Naive thymus-derived CD4-positive, alpha-beta T cell (primary cell): ENCODE measurements at regions of chr3 and their contacts with region 1.

Region 1: GRCh38 chr3:120348981-120349818 is at the start of gene LRRC58:
- DNase-seq: peak; percentile 85 to 95 (median 94)
- ATAC-seq: peak; percentile 95
- H3K4me3 ChIP-seq: peak within 1 kb of the TSS; percentile 91
- H3K4me3 Mint-ChIP-seq: peak within 1 kb of the TSS; percentile 85 to 96 (median 94)
- H3K27ac ChIP-seq: peak within 1 kb of the TSS; percentile 76
- H3K27ac Mint-ChIP-seq: peak within 1 kb of the TSS; percentile 87 to 97 (median 93)
- H3K4me1 ChIP-seq: peaks cover 20 to 26% of the 10 kb centered on the region in 2 donors
- H3K4me1 Mint-ChIP-seq: peaks cover 39 to 54% (median 48%) of the 10 kb centered on the region in 7 donors
- H3K27me3 ChIP-seq: no peaks in the 10 kb centered on the region
- H3K27me3 Mint-ChIP-seq: peaks cover 0 to 29% (median 0%) of the 10 kb centered on the region in 5 donors
- total RNA-seq, gene LRRC58: 12.3 to 24.1 (median 20.8) TPM

Region 2: GRCh38 chr3:119463171-119464169 is 885.7 kb before region 1 on chr3 and contains the start of gene TMEM39A:
- CTCF ChIA-PET with region 1: no interaction called
- POLR2A ChIA-PET with region 1: interaction called, 7 read pairs
- intact Hi-C with region 1: loop called in 1 of 2 experiments (anchors 1 kb)
- DNase-seq: peak; percentile 97 to 99 (median 98)
- ATAC-seq: peak; percentile 91
- H3K4me3 ChIP-seq: peak within 1 kb of the TSS; percentile 93
- H3K4me3 Mint-ChIP-seq: peak within 1 kb of the TSS; percentile 82 to 96 (median 93)
- H3K27ac ChIP-seq: peak within 1 kb of the TSS; percentile 86
- H3K27ac Mint-ChIP-seq: peak within 1 kb of the TSS; percentile 97 to 100 (median 99)
- H3K4me1 ChIP-seq: peaks cover 16 to 26% of the 10 kb centered on the region in 2 donors
- H3K4me1 Mint-ChIP-seq: peaks cover 22 to 56% (median 45%) of the 10 kb centered on the region in 7 donors
- H3K27me3 ChIP-seq: no peaks in the 10 kb centered on the region
- H3K27me3 Mint-ChIP-seq: peaks cover 0 to 4% (median 0%) of the 10 kb centered on the region in 5 donors
- total RNA-seq, gene TMEM39A: 34.9 to 59.5 (median 49.7) TPM

Region 3: GRCh38 chr3:119702530-119703157 is 646.6 kb before region 1 on chr3 and contains the start of gene CFAP91:
- CTCF ChIA-PET with region 1: no interaction called
- POLR2A ChIA-PET with region 1: no interaction called
- intact Hi-C with region 1: loop called in 1 of 2 experiments (anchors 10 kb)
- DNase-seq: peak; percentile 56 to 81 (median 63)
- ATAC-seq: peak; percentile 97
- H3K4me3 ChIP-seq: peak within 1 kb of the TSS; percentile 61
- H3K4me3 Mint-ChIP-seq: peak within 1 kb of the TSS; percentile 67 to 87 (median 82)
- H3K27ac ChIP-seq: peak within 1 kb of the TSS; percentile 16
- H3K27ac Mint-ChIP-seq: peak within 1 kb of the TSS in 6 of 9 donors; percentile 15 to 47 (median 43)
- H3K4me1 ChIP-seq: peaks cover 0 to 13% of the 10 kb centered on the region in 2 donors
- H3K4me1 Mint-ChIP-seq: peaks cover 16 to 36% (median 30%) of the 10 kb centered on the region in 7 donors
- H3K27me3 ChIP-seq: no peaks in the 10 kb centered on the region
- H3K27me3 Mint-ChIP-seq: peaks cover 0 to 33% (median 3%) of the 10 kb centered on the region in 5 donors
- total RNA-seq, gene CFAP91: 0.13 to 0.32 TPM in 2 of 5 experiments, not detected in the others

Region 4: GRCh38 chr3:120331076-120331475 is 18.1 kb before region 1 on chr3:
- CTCF ChIA-PET with region 1: no interaction called
- POLR2A ChIA-PET with region 1: interaction called, 5 read pairs
- intact Hi-C with region 1: loop called in 1 of 2 experiments (anchors 1 kb)
- DNase-seq: no peak
- ATAC-seq: no peak
- H3K4me3 ChIP-seq: no peak overlapping the region
- H3K4me3 Mint-ChIP-seq: no peak overlapping the region
- H3K27ac ChIP-seq: no peak overlapping the region
- H3K27ac Mint-ChIP-seq: no peak overlapping the region
- H3K4me1 ChIP-seq: no peaks in the 10 kb centered on the region
- H3K4me1 Mint-ChIP-seq: peaks cover 0 to 11% (median 5%) of the 10 kb centered on the region in 7 donors
- H3K27me3 ChIP-seq: no peaks in the 10 kb centered on the region
- H3K27me3 Mint-ChIP-seq: no peaks in the 10 kb centered on the region

Region 5: DNA sequence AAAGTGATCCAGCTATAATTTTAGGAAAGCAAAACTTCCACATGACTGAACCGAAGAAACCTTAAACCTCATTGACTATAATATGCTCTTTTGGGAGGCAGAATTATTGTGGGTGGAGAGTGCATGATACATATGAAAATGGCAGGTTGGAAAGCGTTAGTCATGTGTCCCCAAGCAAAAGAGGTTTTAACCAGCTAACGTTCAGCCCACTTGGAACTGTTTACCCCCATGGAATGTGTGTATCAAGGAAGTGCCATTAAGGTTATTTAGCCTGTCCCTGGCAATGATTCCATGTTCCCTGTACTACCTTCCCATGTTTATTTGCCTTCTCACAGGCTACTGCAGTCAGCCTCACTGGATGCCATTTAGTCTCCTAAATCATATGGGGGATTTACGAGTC is 44.0 kb after region 1 on chr3:
- CTCF ChIA-PET with region 1: no interaction called
- POLR2A ChIA-PET with region 1: no interaction called
- intact Hi-C with region 1: no loop called
- DNase-seq: no peak
- ATAC-seq: no peak
- H3K4me3 ChIP-seq: no peak overlapping the region
- H3K4me3 Mint-ChIP-seq: no peak overlapping the region
- H3K27ac ChIP-seq: no peak overlapping the region
- H3K27ac Mint-ChIP-seq: no peak overlapping the region
- H3K4me1 ChIP-seq: no peaks in the 10 kb centered on the region
- H3K4me1 Mint-ChIP-seq: no peaks in the 10 kb centered on the region
- H3K27me3 ChIP-seq: no peaks in the 10 kb centered on the region
- H3K27me3 Mint-ChIP-seq: peaks cover 0 to 4% (median 2%) of the 10 kb centered on the region in 5 donors

Region 6: GRCh38 chr3:120404876-120405275 is 55.7 kb after region 1 on chr3:
- CTCF ChIA-PET with region 1: no interaction called
- POLR2A ChIA-PET with region 1: no interaction called
- intact Hi-C with region 1: no loop called
- DNase-seq: no peak
- ATAC-seq: no peak
- H3K4me3 ChIP-seq: no peak overlapping the region
- H3K4me3 Mint-ChIP-seq: no peak overlapping the region
- H3K27ac ChIP-seq: no peak overlapping the region
- H3K27ac Mint-ChIP-seq: no peak overlapping the region
- H3K4me1 ChIP-seq: no peaks in the 10 kb centered on the region
- H3K4me1 Mint-ChIP-seq: peaks cover 0 to 1% (median 0%) of the 10 kb centered on the region in 7 donors
- H3K27me3 ChIP-seq: no peaks in the 10 kb centered on the region
- H3K27me3 Mint-ChIP-seq: no peaks in the 10 kb centered on the region

Region 7: DNA sequence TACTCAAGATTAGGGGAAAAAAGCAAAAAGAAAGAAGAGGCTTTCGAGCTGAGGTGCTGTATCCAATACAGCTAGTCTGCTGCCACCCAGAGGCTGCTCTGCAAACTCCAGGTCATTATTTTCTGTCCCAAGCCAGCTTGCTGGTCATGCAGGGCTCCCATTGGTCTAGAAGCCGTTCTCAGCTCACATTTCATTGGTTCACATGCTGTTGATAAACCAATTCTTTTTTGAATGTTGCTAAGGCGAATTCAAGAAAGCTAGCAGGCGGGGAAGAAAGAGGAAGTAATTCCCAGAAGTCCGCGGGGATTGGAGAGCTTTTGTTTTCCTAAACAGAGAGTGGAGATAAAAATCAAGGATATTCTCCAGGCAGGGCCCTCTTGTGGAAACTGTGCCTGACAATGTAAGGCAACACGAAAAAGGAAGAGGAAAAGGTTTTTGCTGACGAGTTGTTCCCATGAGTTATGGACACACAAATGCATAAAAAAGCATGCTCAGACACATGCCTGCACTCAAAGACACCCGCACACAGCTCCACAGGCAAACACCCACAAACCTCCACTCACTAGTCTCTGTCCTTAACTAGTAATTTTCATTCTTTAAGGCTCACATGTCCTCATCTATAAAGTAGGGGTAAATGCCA is 68.2 kb after region 1 on chr3:
- CTCF ChIA-PET with region 1: interaction called, 10 read pairs
- POLR2A ChIA-PET with region 1: interaction called, 3 read pairs
- intact Hi-C with region 1: loop called (anchors 1 kb)
- DNase-seq: peak; percentile 58 to 83 (median 79)
- ATAC-seq: peak; percentile 100
- H3K4me3 ChIP-seq: peak overlapping the region; percentile 72
- H3K4me3 Mint-ChIP-seq: peak overlapping the region; percentile 80 to 89 (median 88)
- H3K27ac ChIP-seq: no peak overlapping the region
- H3K27ac Mint-ChIP-seq: peak overlapping the region in 8 of 9 donors; percentile 13 to 76 (median 32)
- H3K4me1 ChIP-seq: no peaks in the 10 kb centered on the region
- H3K4me1 Mint-ChIP-seq: peaks cover 16 to 24% (median 18%) of the 10 kb centered on the region in 7 donors
- H3K27me3 ChIP-seq: no peaks in the 10 kb centered on the region
- H3K27me3 Mint-ChIP-seq: peaks cover 0 to 7% (median 6%) of the 10 kb centered on the region in 5 donors

Region 8: GRCh38 chr3:120596116-120596852 is 247.1 kb after region 1 on chr3 and contains the start of gene NDUFB4:
- CTCF ChIA-PET with region 1: no interaction called
- POLR2A ChIA-PET with region 1: interaction called, 14 read pairs
- intact Hi-C with region 1: loop called (anchors 1 to 2 kb)
- DNase-seq: peak; percentile 84 to 97 (median 93)
- ATAC-seq: peak; percentile 97
- H3K4me3 ChIP-seq: peak within 1 kb of the TSS; percentile 99
- H3K4me3 Mint-ChIP-seq: peak within 1 kb of the TSS in 8 of 10 donors; percentile 85 to 99 (median 96)
- H3K27ac ChIP-seq: peak within 1 kb of the TSS; percentile 92
- H3K27ac Mint-ChIP-seq: peak within 1 kb of the TSS in 5 of 9 donors; percentile 94 to 99 (median 98)
- H3K4me1 ChIP-seq: peaks cover 25 to 27% of the 10 kb centered on the region in 2 donors
- H3K4me1 Mint-ChIP-seq: peaks cover 0 to 20% (median 11%) of the 10 kb centered on the region in 7 donors
- H3K27me3 ChIP-seq: no peaks in the 10 kb centered on the region
- H3K27me3 Mint-ChIP-seq: peaks cover 0 to 20% (median 0%) of the 10 kb centered on the region in 5 donors
- total RNA-seq, gene NDUFB4: 63.4 to 126 (median 76.2) TPM

Region 9: GRCh38 chr3:121431726-121432517 is 1082.7 kb after region 1 on chr3:
- CTCF ChIA-PET with region 1: no interaction called
- POLR2A ChIA-PET with region 1: interaction called, 3 read pairs
- intact Hi-C with region 1: loop called in 1 of 2 experiments (anchors 10 kb)
- DNase-seq: peak in 8 of 9 donors; percentile 36 to 80 (median 74)
- ATAC-seq: peak; percentile 89
- H3K4me3 ChIP-seq: peak overlapping the region; percentile 52
- H3K4me3 Mint-ChIP-seq: peak overlapping the region; percentile 46 to 84 (median 76)
- H3K27ac ChIP-seq: peak overlapping the region; percentile 33
- H3K27ac Mint-ChIP-seq: peak overlapping the region; percentile 48 to 92 (median 84)
- H3K4me1 ChIP-seq: peaks cover 0 to 9% of the 10 kb centered on the region in 2 donors
- H3K4me1 Mint-ChIP-seq: peaks cover 6 to 31% (median 24%) of the 10 kb centered on the region in 7 donors
- H3K27me3 ChIP-seq: no peaks in the 10 kb centered on the region
- H3K27me3 Mint-ChIP-seq: no peaks in the 10 kb centered on the region